Caco-2 (cell line): ENCODE measurements at regions of chr1 and their contacts with region 1.

Region 1: GRCh38 chr1:22665752-22666151 is 12.7 kb downstream of the C1QB start:
- DNase-seq: peak; percentile 61 to 74
- H3K4me3 ChIP-seq: no peak overlapping the region
- H3K4me3 Mint-ChIP-seq: no peak overlapping the region
- H3K27ac Mint-ChIP-seq: no peak overlapping the region
- H3K4me1 ChIP-seq: no peaks in the 10 kb centered on the region
- H3K4me1 Mint-ChIP-seq: no peaks in the 10 kb centered on the region
- H3K27me3 ChIP-seq: no peaks in the 10 kb centered on the region
- H3K27me3 Mint-ChIP-seq: peaks cover 3% of the 10 kb centered on the region
- CTCF ChIP-seq: peak; percentile 69 to 82

Region 2: DNA sequence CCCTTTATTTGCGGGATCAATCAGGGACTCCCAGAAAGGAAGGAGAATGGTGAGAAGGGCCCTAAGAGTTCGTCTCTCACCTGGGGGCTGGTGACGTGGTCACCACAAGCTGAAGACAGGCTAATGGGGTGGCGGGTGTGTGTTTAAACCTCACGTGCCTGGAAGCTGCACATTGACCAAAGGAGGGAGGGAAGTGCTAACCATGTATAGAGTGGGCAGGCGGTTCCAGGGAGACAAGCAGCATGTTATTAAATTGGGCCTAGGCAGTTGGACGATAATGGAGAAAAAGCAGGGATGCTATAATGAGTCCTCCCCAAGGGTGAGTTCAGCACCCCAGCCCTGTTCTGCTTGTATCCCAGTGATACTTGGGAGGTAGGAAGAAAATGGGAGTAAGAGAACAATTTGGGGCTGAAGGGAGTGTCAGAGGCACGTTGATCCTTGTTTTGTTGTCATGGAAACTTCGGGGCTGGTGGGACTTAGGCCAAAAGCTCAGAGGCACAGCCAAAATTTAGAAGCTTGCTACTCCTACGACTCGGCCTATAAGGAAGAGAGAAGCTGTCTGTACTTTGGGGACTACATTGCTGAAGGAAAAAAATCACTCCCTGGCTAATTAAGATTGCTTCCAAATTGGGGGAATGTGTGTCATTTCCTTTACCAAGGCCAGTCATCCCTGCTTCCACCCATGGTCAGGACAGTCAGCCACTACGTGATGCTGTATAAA is 135.7 kb before region 1 on chr1:
- CTCF ChIA-PET with region 1: no interaction called
- POLR2A ChIA-PET with region 1: no interaction called
- intact Hi-C with region 1: no loop called
- DNase-seq: no peak
- H3K4me3 ChIP-seq: no peak overlapping the region
- H3K4me3 Mint-ChIP-seq: no peak overlapping the region
- H3K27ac Mint-ChIP-seq: peak overlapping the region; percentile 10
- H3K4me1 ChIP-seq: no peaks in the 10 kb centered on the region
- H3K4me1 Mint-ChIP-seq: no peaks in the 10 kb centered on the region
- H3K27me3 ChIP-seq: no peaks in the 10 kb centered on the region
- H3K27me3 Mint-ChIP-seq: no peaks in the 10 kb centered on the region
- CTCF ChIP-seq: no peak

Region 3: DNA sequence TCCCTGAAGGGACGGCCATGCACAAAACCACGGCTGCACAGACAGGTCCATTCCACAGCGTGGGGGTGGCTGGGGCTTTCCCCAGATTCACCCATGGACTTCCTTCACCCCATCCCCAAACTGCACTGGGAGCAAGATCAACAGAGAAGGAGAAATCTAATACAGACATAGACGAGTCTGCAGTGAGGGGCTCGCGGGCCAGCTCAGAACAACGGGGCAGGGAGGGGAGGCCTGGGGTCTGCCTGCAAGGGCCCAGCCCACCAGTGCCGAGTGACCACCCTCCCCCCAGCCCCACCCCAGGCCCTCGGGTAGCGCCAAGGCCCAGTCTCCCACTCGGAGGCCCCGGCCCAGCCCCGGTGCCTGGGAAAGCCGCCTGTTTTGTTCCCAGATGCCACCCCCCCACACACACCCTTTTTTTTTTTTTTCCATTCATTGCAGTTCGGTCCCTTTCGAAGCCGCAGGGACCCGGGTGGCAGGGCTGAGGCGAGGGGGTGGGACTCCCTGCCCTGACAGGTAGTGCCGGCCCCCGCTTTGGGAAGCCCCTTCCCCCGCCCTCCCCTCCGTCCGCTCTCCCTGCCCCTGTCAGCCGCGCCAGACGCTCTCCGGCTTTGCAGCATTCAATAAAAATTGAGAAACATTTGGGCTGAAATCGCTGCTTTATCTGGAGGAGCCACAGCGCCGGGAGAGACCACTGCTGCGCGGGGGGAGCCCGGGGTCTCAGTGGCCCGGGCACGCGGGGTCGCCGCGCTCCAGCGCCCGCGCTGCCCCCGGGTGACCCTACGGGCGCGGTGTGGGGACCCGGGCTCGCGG is 44.3 kb after region 1 on chr1:
- CTCF ChIA-PET with region 1: no interaction called
- POLR2A ChIA-PET with region 1: no interaction called
- intact Hi-C with region 1: no loop called
- DNase-seq: peak; percentile 61 to 81
- H3K4me3 ChIP-seq: peak overlapping the region; percentile 59
- H3K4me3 Mint-ChIP-seq: peak overlapping the region; percentile 75
- H3K27ac Mint-ChIP-seq: peak overlapping the region; percentile 63
- H3K4me1 ChIP-seq: no peaks in the 10 kb centered on the region
- H3K4me1 Mint-ChIP-seq: peaks cover 18% of the 10 kb centered on the region
- H3K27me3 ChIP-seq: no peaks in the 10 kb centered on the region
- H3K27me3 Mint-ChIP-seq: no peaks in the 10 kb centered on the region
- CTCF ChIP-seq: no peak

Region 4: GRCh38 chr1:22930235-22930912 is 264.6 kb after region 1 on chr1:
- CTCF ChIA-PET with region 1: no interaction called
- POLR2A ChIA-PET with region 1: no interaction called
- intact Hi-C with region 1: loop called (anchors 1 kb)
- DNase-seq: peak in 1 of 2 experiments; percentile 64
- H3K4me3 ChIP-seq: no peak overlapping the region
- H3K4me3 Mint-ChIP-seq: no peak overlapping the region
- H3K27ac Mint-ChIP-seq: no peak overlapping the region
- H3K4me1 ChIP-seq: no peaks in the 10 kb centered on the region
- H3K4me1 Mint-ChIP-seq: no peaks in the 10 kb centered on the region
- H3K27me3 ChIP-seq: no peaks in the 10 kb centered on the region
- H3K27me3 Mint-ChIP-seq: peaks cover 9% of the 10 kb centered on the region
- CTCF ChIP-seq: peak; percentile 61 to 70

Region 5: DNA sequence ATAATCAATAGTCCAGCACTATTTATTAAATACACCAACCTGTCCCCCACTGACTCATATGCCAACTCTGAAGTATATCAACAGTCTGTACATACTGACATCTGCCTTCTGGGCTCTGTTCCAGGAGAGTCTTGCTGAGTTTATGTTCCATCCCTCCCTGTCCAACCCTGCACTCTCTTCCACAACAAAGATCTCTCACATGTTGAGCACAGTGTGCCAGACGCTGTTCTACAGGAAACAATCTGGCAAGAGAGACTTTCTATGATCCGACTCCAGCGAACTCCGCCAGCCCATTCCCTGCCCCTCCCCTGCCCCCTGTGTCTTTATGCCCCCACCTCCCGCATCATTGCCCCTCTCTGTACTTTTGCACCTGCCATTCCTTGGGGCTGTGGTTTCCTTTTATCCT is 303.6 kb after region 1 on chr1:
- CTCF ChIA-PET with region 1: interaction called, 4 read pairs
- POLR2A ChIA-PET with region 1: no interaction called
- intact Hi-C with region 1: loop called (anchors 1 kb)
- DNase-seq: no peak
- H3K4me3 ChIP-seq: no peak overlapping the region
- H3K4me3 Mint-ChIP-seq: no peak overlapping the region
- H3K27ac Mint-ChIP-seq: no peak overlapping the region
- H3K4me1 ChIP-seq: no peaks in the 10 kb centered on the region
- H3K4me1 Mint-ChIP-seq: no peaks in the 10 kb centered on the region
- H3K27me3 ChIP-seq: no peaks in the 10 kb centered on the region
- H3K27me3 Mint-ChIP-seq: peaks cover 9% of the 10 kb centered on the region
- CTCF ChIP-seq: no peak